ENCODE measurements at regions of chr6 and their contacts with region 1.

Region 1: GRCh38 chr6:165662749-165663282 is at the start of gene PDE10A:
- DNase-seq: peak; percentile 88
- ATAC-seq: peak; percentile 82
- total RNA-seq, gene PDE10A: 15.7 TPM

Region 2: DNA sequence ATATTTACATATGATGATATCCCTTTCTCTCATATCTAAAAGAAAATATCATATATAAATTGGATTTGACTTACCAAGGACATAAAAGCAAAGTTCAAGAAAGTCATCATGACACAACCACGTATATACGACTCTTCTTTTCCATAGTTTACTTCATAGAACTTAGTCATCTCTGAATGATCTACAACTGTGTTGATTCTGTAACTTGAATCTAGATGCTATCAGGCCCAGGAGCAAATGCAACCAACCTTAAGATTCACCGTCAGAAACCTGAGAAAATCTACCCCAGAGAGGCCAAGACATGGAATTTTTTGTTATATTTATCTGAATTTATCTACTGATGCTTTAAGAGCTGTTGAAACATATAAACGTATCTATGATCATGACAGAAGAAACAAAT is 165.3 kb before region 1 on chr6:
- intact Hi-C with region 1: no loop called
- DNase-seq: no peak
- ATAC-seq: no peak

Region 3: GRCh38 chr6:165552248-165552736 is 110.5 kb before region 1 on chr6:
- intact Hi-C with region 1: loop called (anchors 5 kb)
- DNase-seq: no peak
- ATAC-seq: no peak

Region 4: DNA sequence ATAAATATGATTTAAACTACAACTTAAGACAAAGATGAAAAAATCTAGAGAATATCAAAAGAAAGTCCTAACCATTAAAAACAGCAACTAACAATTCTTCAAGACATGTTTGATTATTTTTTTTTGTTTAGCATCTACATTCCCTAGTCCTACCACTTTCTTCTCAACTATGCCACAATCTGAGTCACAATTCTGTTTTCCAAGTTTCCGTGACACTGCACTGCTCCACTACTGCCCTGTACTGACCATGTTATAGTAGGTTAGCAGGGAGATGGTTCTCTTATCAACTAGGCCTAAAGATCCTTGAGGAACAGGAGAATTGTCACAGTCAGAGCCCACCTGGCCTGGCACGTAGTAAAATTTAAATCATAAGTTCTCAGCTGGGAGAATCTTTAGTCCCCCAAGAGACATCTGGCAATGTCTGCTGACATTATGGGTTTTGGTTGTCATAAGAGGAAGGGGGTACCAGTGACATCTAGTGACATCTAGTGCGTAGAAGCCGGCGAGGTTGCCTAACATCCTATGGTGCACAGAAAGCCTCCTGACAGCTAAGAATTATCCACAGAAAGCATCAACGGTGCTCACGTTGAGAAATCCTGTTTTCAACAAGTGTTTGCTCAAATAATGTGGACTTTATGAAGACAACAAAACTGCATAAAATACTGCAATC is 100.3 kb before region 1 on chr6:
- intact Hi-C with region 1: no loop called
- DNase-seq: no peak
- ATAC-seq: no peak

Region 5: GRCh38 chr6:165615636-165616035 is 47.2 kb before region 1 on chr6:
- intact Hi-C with region 1: loop called (anchors 5 kb)
- DNase-seq: no peak
- ATAC-seq: peak; percentile 92

Region 6: DNA sequence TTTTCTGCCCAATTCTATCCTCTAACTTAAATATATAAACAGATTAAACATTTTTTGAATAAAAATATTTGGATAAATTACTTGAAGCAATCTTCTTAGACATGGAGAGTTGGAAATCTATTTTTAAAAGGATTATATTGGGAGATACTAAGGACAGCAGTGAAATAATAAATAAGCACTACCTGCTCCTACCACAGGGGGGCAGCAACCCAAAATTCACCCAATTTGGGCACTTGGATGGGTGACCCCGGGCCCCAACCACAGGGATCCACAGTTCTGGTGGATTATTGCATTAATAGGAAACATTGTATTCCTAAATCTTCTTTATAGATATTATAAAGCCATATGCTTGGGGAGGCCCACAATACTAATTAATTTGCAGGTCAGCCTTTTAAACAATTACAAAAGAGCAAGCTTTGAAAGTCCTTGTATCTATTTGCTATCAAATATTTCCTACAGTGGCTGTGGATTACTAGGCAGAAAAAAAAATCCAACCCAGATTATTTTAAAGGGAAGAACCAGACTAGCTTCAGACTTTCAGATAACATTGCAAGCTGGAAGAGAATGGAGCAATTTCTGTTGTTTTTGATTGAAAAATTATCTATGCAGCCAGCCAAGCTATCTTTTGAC is 66.6 kb after region 1 on chr6:
- intact Hi-C with region 1: loop called (anchors 5 kb)
- DNase-seq: no peak
- ATAC-seq: no peak

Region 7: DNA sequence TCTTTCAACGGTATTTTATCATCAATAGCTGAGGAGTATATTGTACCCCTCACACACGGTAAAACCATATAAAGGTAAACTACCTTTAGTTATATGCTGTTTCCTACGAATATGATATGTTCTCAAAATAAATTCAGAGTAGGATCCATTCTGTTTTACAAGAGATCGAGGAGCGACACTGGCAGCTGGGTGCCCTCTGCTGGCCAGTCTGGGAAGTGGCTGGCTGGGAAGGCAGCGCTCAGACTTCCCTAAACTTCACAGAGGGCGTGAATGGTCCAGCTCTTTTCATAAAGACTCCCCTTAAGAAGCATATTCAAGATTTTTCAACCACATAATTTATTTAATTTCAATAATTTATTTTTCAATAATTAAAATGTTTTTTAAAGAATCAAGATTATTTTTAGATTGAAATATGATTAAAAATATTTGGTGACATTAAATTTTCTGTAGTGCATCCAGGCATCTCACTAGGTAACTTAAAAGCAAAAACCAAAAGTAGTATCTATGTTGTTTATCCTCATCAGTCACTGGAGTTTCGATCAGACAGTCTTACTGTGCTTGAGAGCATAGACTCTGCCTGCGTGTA is 187.7 kb after region 1 on chr6:
- intact Hi-C with region 1: loop called (anchors 5 kb)
- DNase-seq: no peak
- ATAC-seq: peak; percentile 68